ENCODE measurements at regions of chr1 and their contacts with region 1.

Region 1: GRCh38 chr1:156129706-156130581 is 15.4 kb downstream of the LMNA start:
- DNase-seq: peak; percentile 99
- H3K4me3 Mint-ChIP-seq: peak overlapping the region; percentile 57
- H3K27ac Mint-ChIP-seq: peak overlapping the region; percentile 99
- H3K4me1 Mint-ChIP-seq: peaks cover 57% of the 10 kb centered on the region
- H3K27me3 Mint-ChIP-seq: no peaks in the 10 kb centered on the region
- CTCF ChIP-seq: peak; percentile 99

Region 2: DNA sequence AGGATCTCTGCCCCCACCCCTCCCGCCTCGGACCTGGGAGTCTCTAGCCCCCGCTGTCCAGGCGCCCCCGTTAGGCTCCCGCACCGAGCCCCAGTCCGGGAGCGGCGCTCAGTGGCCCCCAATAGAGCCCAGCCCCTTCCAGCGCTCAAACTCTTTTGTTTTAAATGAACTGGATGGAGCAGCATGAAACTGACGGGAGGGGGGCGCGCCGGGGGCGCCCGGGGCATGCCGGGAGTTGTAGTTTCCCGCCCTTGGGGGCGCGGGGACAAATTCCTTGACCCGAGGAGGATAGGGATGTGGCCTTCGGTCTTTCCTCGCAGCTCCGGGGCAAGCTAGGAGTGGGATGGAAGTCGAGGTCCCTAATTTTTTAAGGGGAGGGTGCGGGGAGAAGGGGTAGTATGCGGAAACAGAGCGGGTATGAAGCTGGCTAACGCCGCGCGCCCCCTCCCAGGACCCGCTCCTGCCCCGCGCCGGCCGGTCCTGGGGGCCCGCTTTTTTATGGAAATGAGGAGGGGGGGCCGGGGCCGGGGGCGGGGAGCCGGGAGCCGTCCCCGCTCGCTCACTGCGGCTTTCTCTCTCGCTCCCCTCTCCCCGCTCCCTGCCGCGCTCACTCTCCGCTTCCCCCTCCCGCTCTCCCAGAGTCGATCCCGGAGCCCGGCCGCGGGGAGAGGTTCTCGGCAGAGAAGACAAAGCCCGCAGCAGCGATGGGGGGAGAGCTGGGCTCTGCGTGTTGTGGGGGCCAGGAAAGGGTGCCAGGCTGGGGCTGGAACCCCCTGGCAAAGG is 47.4 kb before region 1 on chr1 and contains the start of gene MEX3A:
- CTCF ChIA-PET with region 1: interaction called, 10 read pairs
- intact Hi-C with region 1: no loop called
- DNase-seq: peak; percentile 83
- H3K4me3 Mint-ChIP-seq: peak within 1 kb of the TSS; percentile 76
- H3K27ac Mint-ChIP-seq: no peak within 1 kb of the TSS
- H3K4me1 Mint-ChIP-seq: peaks cover 19% of the 10 kb centered on the region
- H3K27me3 Mint-ChIP-seq: no peaks in the 10 kb centered on the region
- CTCF ChIP-seq: no peak
- total RNA-seq, gene MEX3A: 3.3 and 5.0 TPM in 2 replicates

Region 3: DNA sequence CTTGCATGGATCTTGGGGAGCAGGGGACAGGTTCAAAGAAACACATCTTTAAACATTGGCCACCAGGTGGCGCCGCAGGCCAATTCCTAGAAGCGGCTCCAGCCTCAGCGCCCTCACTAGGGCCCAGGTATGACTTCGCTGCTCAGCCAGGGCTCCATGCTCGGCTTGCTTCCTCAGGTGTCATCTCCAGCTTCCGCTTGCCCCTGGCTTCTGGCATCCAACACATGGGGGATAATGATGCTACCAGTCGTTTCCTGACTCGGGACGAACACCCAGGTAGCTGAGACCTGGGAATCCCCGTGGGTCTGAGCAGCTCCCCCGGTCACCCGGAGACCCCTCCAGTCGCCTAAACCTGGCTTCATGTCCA is 39.1 kb before region 1 on chr1:
- CTCF ChIA-PET with region 1: interaction called, 356 read pairs
- intact Hi-C with region 1: loop called (anchors 1 kb)
- DNase-seq: peak; percentile 94
- H3K4me3 Mint-ChIP-seq: no peak overlapping the region
- H3K27ac Mint-ChIP-seq: no peak overlapping the region
- H3K4me1 Mint-ChIP-seq: peaks cover 47% of the 10 kb centered on the region
- H3K27me3 Mint-ChIP-seq: no peaks in the 10 kb centered on the region
- CTCF ChIP-seq: peak; percentile 95

Region 4: DNA sequence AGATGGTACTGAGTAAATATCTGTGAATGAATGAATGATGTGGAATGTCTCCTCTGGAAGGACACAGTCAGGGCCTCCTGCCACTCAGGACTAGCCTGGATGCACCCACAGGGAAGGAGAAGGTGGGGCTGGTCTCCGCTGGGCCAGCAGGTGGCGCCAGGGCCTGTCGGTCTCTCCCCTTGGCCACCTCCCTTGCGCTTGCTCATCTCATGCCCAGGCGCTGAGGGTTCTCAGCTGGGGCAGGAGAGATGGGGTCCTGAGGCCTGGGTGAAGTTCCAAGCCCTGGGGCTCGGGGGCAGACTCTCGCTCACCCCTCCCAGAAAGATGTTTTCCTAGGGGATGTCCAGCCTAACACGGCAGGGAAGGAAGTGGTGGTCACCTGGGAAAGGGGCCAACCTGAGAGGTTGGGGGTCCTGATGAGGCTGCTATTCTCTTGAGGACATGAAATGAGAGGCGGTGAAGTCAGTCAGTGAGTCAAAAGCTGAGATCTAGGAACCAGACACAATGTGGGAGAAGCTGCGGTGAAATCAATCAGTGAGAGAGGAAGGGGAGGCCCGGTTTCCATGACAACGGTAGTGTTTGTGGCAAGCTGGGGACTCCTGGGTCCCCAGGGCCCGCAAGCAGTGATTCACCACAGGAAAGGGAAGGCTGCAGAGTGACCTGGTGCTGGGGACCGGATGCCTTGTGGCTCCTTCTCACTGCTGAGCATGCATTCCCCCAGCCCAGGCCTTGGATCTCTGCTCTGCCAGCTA is 33.1 kb before region 1 on chr1:
- CTCF ChIA-PET with region 1: interaction called, 356 read pairs
- intact Hi-C with region 1: loop called (anchors 1 kb)
- DNase-seq: peak; percentile 97
- H3K4me3 Mint-ChIP-seq: peak overlapping the region; percentile 27
- H3K27ac Mint-ChIP-seq: peak overlapping the region; percentile 98
- H3K4me1 Mint-ChIP-seq: peaks cover 61% of the 10 kb centered on the region
- H3K27me3 Mint-ChIP-seq: no peaks in the 10 kb centered on the region
- CTCF ChIP-seq: peak; percentile 93

Region 5: DNA sequence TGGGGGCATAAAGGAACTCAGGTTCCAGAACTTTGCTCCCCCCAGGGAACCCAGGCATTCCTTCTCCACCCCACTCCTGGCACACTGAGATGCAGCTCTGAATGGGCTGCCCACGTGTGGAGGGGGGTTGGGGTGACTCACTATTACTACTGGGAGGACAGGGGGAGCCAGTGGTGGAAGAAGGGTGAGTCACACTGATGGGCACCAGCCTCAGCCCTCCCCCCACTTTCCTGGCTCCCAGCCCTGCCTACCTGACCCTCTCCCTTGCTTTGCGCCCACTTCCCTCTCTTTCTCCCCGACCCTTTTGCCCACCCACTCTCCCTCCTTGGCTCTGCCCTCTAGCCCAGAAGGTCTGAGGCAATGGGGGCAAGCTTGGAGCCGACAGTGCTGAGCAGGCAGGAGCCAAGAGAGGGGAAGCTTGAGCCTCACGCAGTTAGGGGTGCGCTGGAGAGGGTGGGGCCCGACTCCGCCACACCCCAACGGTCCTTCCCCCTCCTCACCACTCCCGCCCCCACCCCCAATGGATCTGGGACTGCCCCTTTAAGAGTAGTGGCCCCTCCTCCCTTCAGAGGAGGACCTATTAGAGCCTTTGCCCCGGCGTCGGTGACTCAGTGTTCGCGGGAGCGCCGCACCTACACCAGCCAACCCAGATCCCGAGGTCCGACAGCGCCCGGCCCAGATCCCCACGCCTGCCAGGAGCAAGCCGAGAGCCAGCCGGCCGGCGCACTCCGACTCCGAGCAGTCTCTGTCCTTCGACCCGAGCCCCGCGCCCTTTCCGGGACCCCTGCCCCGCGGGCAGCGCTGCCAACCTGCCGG is 15.6 kb before region 1 on chr1 and contains the start of gene LMNA:
- CTCF ChIA-PET with region 1: interaction called, 32 read pairs
- intact Hi-C with region 1: no loop called
- DNase-seq: peak; percentile 96
- H3K4me3 Mint-ChIP-seq: peak within 1 kb of the TSS; percentile 82
- H3K27ac Mint-ChIP-seq: peak within 1 kb of the TSS; percentile 85
- H3K4me1 Mint-ChIP-seq: peaks cover 52% of the 10 kb centered on the region
- H3K27me3 Mint-ChIP-seq: no peaks in the 10 kb centered on the region
- CTCF ChIP-seq: no peak
- total RNA-seq, gene LMNA: 499 and 514 TPM in 2 replicates

Region 6: DNA sequence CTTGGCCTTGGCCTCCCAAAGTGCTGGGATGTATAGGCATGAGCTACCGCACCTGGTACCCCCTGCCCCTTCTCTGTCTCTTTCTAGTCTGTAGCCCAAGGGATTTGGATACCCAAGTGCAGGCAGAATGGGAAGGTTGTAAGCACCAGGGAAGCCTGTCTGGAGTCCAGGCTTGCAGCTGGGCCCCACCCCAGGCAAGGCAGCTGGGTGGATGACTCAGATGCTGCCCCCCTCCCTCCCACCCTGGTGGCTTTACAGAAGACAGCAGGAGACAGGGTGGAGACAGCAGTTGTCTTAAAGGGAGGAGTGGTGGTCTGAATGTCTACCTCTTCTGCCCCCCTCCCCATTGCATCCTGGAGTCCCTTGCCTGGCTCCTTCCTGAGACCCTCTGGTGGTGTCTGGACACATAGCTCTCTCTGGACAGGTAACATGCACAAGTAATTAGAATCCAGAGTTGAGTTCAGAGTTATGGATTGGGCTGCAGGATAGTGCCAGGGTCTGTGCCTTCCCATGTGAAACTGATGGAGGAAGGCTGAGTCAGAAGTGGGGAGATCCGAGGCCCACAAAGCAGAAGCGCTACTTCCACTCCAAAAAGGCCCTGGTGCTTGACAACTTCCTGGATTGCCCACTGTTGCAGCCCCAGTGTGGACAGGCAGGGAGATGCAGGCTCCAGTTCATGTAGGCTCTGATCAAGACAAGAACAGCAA is 10.3 kb before region 1 on chr1:
- CTCF ChIA-PET with region 1: interaction called, 32 read pairs
- intact Hi-C with region 1: no loop called
- DNase-seq: peak; percentile 56
- H3K4me3 Mint-ChIP-seq: peak overlapping the region; percentile 82
- H3K27ac Mint-ChIP-seq: peak overlapping the region; percentile 60
- H3K4me1 Mint-ChIP-seq: peaks cover 72% of the 10 kb centered on the region
- H3K27me3 Mint-ChIP-seq: no peaks in the 10 kb centered on the region
- CTCF ChIP-seq: no peak